GM12878 (cell line): ENCODE measurements at regions of chr2 and their contacts with region 1.

Region 1: GRCh38 chr2:44778671-44779476 is 162.6 kb upstream of the SIX3 start:
- DNase-seq: peak; percentile 73
- ATAC-seq: peak; percentile 96
- H3K4me3 ChIP-seq: peak overlapping the region; percentile 78
- H3K27ac ChIP-seq: peak overlapping the region; percentile 72
- H3K4me1 ChIP-seq: peaks cover 25% of the 10 kb centered on the region
- H3K27me3 ChIP-seq: no peaks in the 10 kb centered on the region
- CTCF ChIP-seq: 0 out of 6 replicates have a peak, but pooled peaks of 1 of the 3 experiments have one; percentile 0
- EP300 ChIP-seq: peak; percentile 35 to 75; a peak in 2 of 4 replicates
- POLR2A ChIP-seq: no peak
- RAD21 ChIP-seq: 0 out of 2 replicates have a peak, but pooled peaks have one; percentile 12

Region 2: GRCh38 chr2:43461453-43462073 is 1317.3 kb before region 1 on chr2:
- CTCF ChIA-PET with region 1: no interaction called
- POLR2A ChIA-PET with region 1: no interaction called
- RAD21 ChIA-PET with region 1: no interaction called
- SMC1A ChIA-PET with region 1: no interaction called
- in situ Hi-C with region 1: no loop called
- intact Hi-C with region 1: no loop called
- DNase-seq: peak; percentile 81
- ATAC-seq: peak; percentile 97
- H3K4me3 ChIP-seq: peak overlapping the region; percentile 12; the same call in 1 of the 2 replicates
- H3K27ac ChIP-seq: peak overlapping the region; percentile 76
- H3K4me1 ChIP-seq: peaks cover 40% of the 10 kb centered on the region
- H3K27me3 ChIP-seq: no peaks in the 10 kb centered on the region
- CTCF ChIP-seq: no peak
- EP300 ChIP-seq: peak; percentile 53 to 62; a peak in 2 of 4 replicates
- POLR2A ChIP-seq: peak; percentile 54
- RAD21 ChIP-seq: peak; percentile 24; the same call in 1 of the 2 replicates

Region 3: GRCh38 chr2:44515416-44515815 is 263.5 kb before region 1 on chr2:
- CTCF ChIA-PET with region 1: no interaction called
- POLR2A ChIA-PET with region 1: no interaction called
- RAD21 ChIA-PET with region 1: no interaction called
- SMC1A ChIA-PET with region 1: no interaction called
- in situ Hi-C with region 1: no loop called
- intact Hi-C with region 1: no loop called
- DNase-seq: no peak
- ATAC-seq: no peak
- H3K4me3 ChIP-seq: no peak overlapping the region
- H3K27ac ChIP-seq: no peak overlapping the region
- H3K4me1 ChIP-seq: no peaks in the 10 kb centered on the region
- H3K27me3 ChIP-seq: no peaks in the 10 kb centered on the region
- CTCF ChIP-seq: no peak
- EP300 ChIP-seq: no peak
- POLR2A ChIP-seq: no peak
- RAD21 ChIP-seq: no peak

Region 4: DNA sequence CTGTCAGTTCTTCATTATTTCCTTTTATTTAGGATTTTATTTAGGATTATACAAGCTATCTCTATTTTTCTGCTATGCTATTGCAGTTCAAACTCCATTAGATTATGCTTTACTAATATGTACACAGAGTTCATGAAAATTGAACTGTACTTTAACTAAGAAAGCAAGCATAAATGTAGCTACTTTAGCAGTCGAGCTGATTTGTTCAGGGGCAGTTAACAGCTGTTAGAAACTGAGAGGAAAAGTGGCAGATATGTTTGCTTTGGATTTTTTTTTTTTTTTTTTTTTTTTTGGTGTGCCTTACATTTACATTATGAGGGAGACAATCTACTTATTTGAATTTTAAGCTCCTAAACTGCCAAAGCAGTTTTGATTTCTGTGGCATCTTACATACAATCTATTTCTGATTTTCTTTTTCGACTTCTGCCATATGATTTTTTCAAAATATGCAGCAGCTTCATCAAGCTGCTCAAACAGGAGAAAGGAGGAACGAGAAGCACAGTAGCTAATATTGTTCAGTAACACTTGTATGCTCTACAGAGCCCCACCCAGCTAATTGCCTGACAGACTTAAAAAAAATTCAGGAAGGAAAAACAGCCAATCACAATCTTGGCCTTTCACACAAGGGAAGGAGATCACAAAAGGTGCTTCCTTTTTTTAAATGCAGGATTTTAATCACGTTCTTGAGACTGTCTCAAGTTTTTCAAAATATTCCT is 70.8 kb before region 1 on chr2:
- CTCF ChIA-PET with region 1: interaction called, 4 read pairs
- POLR2A ChIA-PET with region 1: interaction called, 3 read pairs
- RAD21 ChIA-PET with region 1: interaction called, 15 read pairs
- SMC1A ChIA-PET with region 1: interaction called, 9 read pairs
- in situ Hi-C with region 1: no loop called
- intact Hi-C with region 1: no loop called
- DNase-seq: peak; percentile 25
- ATAC-seq: peak; percentile 86
- H3K4me3 ChIP-seq: no peak overlapping the region; the same call in 1 of the 2 replicates
- H3K27ac ChIP-seq: peak overlapping the region; percentile 23; the same call in 1 of the 2 replicates
- H3K4me1 ChIP-seq: peaks cover 8% of the 10 kb centered on the region
- H3K27me3 ChIP-seq: no peaks in the 10 kb centered on the region
- CTCF ChIP-seq: no peak
- EP300 ChIP-seq: no peak
- POLR2A ChIP-seq: no peak
- RAD21 ChIP-seq: no peak

Region 5: GRCh38 chr2:44731505-44731904 is 47.4 kb before region 1 on chr2:
- CTCF ChIA-PET with region 1: no interaction called
- POLR2A ChIA-PET with region 1: interaction called, 4 read pairs
- RAD21 ChIA-PET with region 1: interaction called, 4 read pairs
- SMC1A ChIA-PET with region 1: interaction called, 12 read pairs
- in situ Hi-C with region 1: no loop called
- intact Hi-C with region 1: loop called (anchors 2 kb)
- DNase-seq: peak; percentile 58
- ATAC-seq: peak; percentile 99
- H3K4me3 ChIP-seq: no peak overlapping the region
- H3K27ac ChIP-seq: no peak overlapping the region; the same call in 1 of the 2 replicates
- H3K4me1 ChIP-seq: peaks cover 20% of the 10 kb centered on the region
- H3K27me3 ChIP-seq: no peaks in the 10 kb centered on the region
- CTCF ChIP-seq: no peak
- EP300 ChIP-seq: peak; percentile 80 to 94
- POLR2A ChIP-seq: no peak
- RAD21 ChIP-seq: no peak

Region 6: GRCh38 chr2:44802777-44803424 is 24.0 kb after region 1 on chr2:
- CTCF ChIA-PET with region 1: interaction called, 11 read pairs
- POLR2A ChIA-PET with region 1: no interaction called
- RAD21 ChIA-PET with region 1: interaction called, 11 read pairs
- SMC1A ChIA-PET with region 1: interaction called, 8 read pairs
- in situ Hi-C with region 1: no loop called
- intact Hi-C with region 1: no loop called
- DNase-seq: no peak
- ATAC-seq: no peak
- H3K4me3 ChIP-seq: no peak overlapping the region
- H3K27ac ChIP-seq: no peak overlapping the region
- H3K4me1 ChIP-seq: peaks cover 3% of the 10 kb centered on the region
- H3K27me3 ChIP-seq: peaks cover 0 to 6% of the 10 kb centered on the region in 2 experiments
- CTCF ChIP-seq: no peak
- EP300 ChIP-seq: no peak
- POLR2A ChIP-seq: no peak
- RAD21 ChIP-seq: no peak

Region 7: DNA sequence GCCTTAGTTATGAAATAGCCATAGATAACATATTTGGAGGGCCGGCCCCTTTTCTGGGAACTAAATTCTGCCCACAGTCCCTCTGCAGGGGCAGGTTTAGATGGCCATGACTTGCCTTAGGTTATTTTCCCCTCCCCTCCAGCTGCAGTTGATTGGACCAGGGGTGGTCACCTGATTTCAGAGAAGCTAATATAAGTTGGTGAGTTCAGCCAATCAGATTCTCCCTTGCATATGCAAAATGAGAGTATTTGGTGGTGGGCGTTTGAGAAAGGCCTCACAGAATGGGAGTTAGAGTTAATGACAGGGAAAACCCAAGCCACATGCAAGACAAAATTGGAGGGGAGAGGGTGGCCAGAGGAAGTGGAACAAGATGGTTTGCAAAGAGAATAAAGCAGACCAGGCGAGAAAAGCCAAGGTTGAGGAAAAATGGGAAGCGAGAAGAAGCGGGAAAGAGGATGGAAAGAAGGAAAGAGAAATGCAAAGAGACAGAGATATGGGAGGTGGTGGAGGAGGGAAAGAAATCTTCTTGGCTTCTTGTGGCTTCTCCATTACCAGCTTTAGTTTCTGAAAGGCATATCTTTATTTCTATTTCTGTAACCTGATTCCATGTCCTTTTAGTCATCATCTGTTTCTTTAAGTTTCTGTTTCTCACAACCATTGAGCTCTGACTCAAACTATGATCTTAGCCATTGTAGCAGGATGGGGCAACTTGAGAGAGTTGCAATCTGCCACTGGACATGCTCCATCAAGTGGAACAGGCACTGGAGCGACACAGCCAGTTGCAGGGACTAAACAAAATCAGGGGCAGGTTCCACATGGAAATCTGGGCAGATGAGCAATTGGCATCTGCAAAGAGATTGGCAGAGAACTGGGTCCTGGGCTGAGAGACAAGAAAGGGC is 54.5 kb after region 1 on chr2:
- CTCF ChIA-PET with region 1: interaction called, 9 read pairs
- POLR2A ChIA-PET with region 1: interaction called, 7 read pairs
- RAD21 ChIA-PET with region 1: interaction called, 11 read pairs
- SMC1A ChIA-PET with region 1: interaction called, 16 read pairs
- in situ Hi-C with region 1: no loop called
- intact Hi-C with region 1: loop called (anchors 1 kb)
- DNase-seq: peak; percentile 86
- ATAC-seq: peak; percentile 84
- H3K4me3 ChIP-seq: peak overlapping the region; percentile 19; the same call in 1 of the 2 replicates
- H3K27ac ChIP-seq: peak overlapping the region; percentile 62
- H3K4me1 ChIP-seq: peaks cover 43% of the 10 kb centered on the region
- H3K27me3 ChIP-seq: no peaks in the 10 kb centered on the region
- CTCF ChIP-seq: no peak
- EP300 ChIP-seq: peak in 1 of 2 experiments; percentile 63; a peak in 2 of 4 replicates
- POLR2A ChIP-seq: no peak
- RAD21 ChIP-seq: no peak